Aorta (tissue), 5 donors: ENCODE measurements at regions of chr7 and their contacts with region 1.

Region 1: DNA sequence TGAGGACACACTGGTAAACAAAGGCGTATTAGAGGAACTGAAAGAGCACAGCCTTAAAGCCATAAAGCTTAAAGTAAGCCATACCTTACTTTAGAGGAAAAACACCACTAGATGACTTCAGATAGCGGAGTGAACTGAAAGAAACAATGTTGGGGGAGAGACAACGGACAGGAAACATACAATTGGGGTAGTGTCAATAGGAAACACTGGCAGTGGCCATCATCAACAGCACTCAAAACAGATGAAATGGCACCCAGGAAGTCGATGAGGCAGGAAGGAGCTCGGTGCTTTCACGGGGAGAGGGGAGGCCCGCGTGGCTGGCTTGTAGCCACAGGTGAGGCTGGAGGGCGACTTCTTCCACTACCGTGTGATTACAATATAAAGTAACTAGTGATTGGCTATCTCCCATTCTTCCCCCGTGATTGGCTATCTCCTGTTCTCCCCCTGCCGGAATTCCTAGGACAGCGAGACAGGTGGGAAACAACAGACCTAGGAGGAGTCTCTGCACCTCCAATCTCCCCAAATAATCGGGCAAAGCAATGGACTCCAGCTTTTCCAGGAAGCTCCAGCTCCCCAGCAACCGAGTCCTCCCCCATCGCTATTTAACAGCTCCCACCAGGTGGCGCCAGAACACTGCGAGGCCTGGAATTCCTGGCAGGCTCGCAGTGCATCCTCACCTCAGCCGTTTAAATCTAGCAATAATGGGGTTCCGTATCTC is 2.4 kb upstream of the TAS2R38 start:
- DNase-seq: peak; percentile 83 to 89
- ATAC-seq: no peak
- H3K4me3 ChIP-seq: no peak overlapping the region
- H3K27ac ChIP-seq: no peak overlapping the region
- H3K4me1 ChIP-seq: no peaks in the 10 kb centered on the region
- H3K27me3 ChIP-seq: no peaks in the 10 kb centered on the region

Region 2: DNA sequence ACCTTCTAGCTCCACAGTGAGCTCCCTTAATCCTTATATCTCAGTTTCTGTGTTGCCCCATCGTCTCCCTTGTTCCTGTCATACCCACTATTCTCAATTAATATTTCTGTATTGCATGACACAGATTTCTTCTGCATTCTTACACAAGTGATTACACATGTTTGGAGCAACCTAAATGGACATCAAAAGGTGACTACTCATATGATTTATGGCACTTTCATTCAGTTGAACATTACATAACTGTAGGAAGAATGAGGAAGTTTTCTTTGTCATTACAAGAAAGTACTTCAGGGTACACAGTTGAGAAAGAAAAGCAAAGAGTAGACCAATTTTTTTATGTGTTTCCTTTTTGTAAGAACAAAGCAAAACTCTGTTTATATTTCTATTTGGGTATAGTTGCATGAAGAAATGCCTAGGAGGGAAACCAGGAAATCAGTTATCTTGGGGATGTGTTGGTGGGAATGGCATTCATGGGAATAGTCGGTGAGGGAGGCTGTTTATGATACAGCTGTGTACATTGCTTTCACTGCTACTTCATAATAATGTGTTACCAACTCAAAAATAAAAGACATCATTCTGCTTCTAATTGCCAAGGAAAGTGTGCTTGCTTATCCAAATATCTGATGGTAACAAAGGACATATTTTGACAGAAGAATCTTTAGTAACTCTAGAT is 111.1 kb before region 1 on chr7:
- intact Hi-C with region 1: no loop called
- DNase-seq: no peak
- ATAC-seq: no peak
- H3K4me3 ChIP-seq: no peak overlapping the region
- H3K27ac ChIP-seq: no peak overlapping the region
- H3K4me1 ChIP-seq: no peaks in the 10 kb centered on the region
- H3K27me3 ChIP-seq: no peaks in the 10 kb centered on the region

Region 3: GRCh38 chr7:142088022-142088714 is 112.2 kb after region 1 on chr7:
- intact Hi-C with region 1: loop called in 1 of 2 experiments (anchors 10 kb)
- DNase-seq: no peak
- ATAC-seq: no peak
- H3K4me3 ChIP-seq: no peak overlapping the region
- H3K27ac ChIP-seq: no peak overlapping the region
- H3K4me1 ChIP-seq: peaks cover 0 to 1% of the 10 kb centered on the region in 2 donors
- H3K27me3 ChIP-seq: no peaks in the 10 kb centered on the region

Region 4: GRCh38 chr7:142188846-142189245 is 212.9 kb after region 1 on chr7:
- intact Hi-C with region 1: loop called (anchors 2 to 5 kb)
- DNase-seq: no peak
- ATAC-seq: no peak
- H3K4me3 ChIP-seq: no peak overlapping the region
- H3K27ac ChIP-seq: no peak overlapping the region
- H3K4me1 ChIP-seq: no peaks in the 10 kb centered on the region
- H3K27me3 ChIP-seq: no peaks in the 10 kb centered on the region

Region 5: GRCh38 chr7:142301923-142302550 is 326.1 kb after region 1 on chr7:
- intact Hi-C with region 1: loop called in 1 of 2 experiments (anchors 5 kb)
- DNase-seq: no peak
- ATAC-seq: no peak
- H3K4me3 ChIP-seq: no peak overlapping the region
- H3K27ac ChIP-seq: no peak overlapping the region
- H3K4me1 ChIP-seq: no peaks in the 10 kb centered on the region
- H3K27me3 ChIP-seq: no peaks in the 10 kb centered on the region